ENCODE measurements at regions of chr3 and their contacts with region 1.

Region 1: GRCh38 chr3:25027650-25028049 is 400.4 kb upstream of the RARB start:
- DNase-seq: no peak

Region 2: GRCh38 chr3:24662449-24663345 is 365.0 kb before region 1 on chr3:
- intact Hi-C with region 1: no loop called
- DNase-seq: no peak

Region 3: GRCh38 chr3:24937228-24937627 is 90.4 kb before region 1 on chr3:
- intact Hi-C with region 1: no loop called
- DNase-seq: no peak

Region 4: DNA sequence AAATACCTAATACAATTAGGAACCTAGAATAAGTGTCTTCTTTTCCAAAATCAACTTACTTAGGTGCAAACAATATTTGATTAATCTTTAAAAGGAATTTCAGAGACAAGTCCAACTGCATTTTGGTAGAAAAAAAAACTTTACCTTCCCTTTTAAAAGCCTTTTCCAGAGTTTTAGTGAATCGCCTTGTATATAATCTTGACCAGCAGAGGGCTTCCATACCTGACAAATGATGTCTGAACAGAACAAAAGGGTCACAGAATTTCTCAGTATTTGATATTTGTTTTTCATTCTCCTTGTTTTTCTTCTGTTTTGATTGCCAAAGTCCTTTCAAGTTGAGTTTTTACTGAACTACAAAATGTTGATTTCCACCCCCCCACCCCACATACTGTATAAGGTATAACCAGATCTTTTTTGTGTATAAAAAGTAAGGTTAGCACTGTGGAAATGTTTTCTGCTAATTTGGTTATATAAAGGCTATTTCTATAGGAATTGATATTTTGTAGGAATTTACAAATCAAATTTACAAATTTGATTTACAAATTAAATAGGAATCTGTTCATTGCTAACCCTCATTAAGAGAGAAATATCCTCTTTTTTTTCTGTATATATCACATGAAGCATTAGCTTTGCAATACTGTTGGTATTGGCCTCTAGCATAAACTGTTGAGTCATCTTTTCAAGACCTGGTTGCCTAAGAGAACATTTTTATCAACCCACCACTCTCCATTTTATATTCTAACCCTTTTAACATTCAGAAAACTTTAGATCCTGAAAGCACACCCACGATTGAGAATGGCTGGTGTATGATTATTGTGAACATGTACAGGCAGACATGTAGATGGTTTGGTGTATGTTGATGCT is 63.7 kb before region 1 on chr3:
- intact Hi-C with region 1: loop called (anchors 5 kb)
- DNase-seq: no peak

Region 5: DNA sequence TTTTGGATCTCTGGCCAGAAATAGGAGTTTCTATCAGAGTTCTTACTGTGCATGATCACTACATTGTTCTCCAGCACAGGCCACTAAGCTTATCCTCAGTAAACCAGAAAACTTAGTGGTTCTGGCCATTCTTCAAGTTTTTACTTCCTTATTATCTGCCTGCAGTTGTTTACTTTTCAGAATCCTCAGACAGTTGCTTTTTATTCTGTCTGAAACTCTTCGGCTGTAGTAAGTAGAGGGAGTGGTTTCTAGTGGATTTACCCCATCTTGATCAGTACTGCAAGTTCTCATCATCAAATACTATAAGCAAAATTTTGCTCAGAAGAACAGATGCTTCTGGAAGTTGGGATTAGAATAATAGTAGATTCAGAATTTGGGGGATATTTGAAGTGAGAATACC is 207.4 kb after region 1 on chr3:
- intact Hi-C with region 1: no loop called
- DNase-seq: no peak

Measured in cardiac septum (tissue), 1 donor.